ENCODE measurements at regions of chr14 and their contacts with region 1.

Region 1: GRCh38 chr14:34951271-34951670 is 31.5 kb upstream of the SRP54 start:
- DNase-seq: no peak
- H3K4me3 ChIP-seq: no peak overlapping the region
- H3K27ac ChIP-seq: peak overlapping the region; percentile 58
- H3K4me1 ChIP-seq: peaks cover 5% of the 10 kb centered on the region; the same call in 1 of the 2 replicates
- H3K27me3 ChIP-seq: no peaks in the 10 kb centered on the region
- CTCF ChIP-seq: no peak

Region 2: GRCh38 chr14:34023824-34024767 is 927.2 kb before region 1 on chr14:
- CTCF ChIA-PET with region 1: no interaction called
- POLR2A ChIA-PET with region 1: no interaction called
- intact Hi-C with region 1: no loop called
- DNase-seq: no peak
- H3K4me3 ChIP-seq: no peak overlapping the region
- H3K27ac ChIP-seq: no peak overlapping the region
- H3K4me1 ChIP-seq: no peaks in the 10 kb centered on the region
- H3K27me3 ChIP-seq: no peaks in the 10 kb centered on the region
- CTCF ChIP-seq: no peak

Region 3: DNA sequence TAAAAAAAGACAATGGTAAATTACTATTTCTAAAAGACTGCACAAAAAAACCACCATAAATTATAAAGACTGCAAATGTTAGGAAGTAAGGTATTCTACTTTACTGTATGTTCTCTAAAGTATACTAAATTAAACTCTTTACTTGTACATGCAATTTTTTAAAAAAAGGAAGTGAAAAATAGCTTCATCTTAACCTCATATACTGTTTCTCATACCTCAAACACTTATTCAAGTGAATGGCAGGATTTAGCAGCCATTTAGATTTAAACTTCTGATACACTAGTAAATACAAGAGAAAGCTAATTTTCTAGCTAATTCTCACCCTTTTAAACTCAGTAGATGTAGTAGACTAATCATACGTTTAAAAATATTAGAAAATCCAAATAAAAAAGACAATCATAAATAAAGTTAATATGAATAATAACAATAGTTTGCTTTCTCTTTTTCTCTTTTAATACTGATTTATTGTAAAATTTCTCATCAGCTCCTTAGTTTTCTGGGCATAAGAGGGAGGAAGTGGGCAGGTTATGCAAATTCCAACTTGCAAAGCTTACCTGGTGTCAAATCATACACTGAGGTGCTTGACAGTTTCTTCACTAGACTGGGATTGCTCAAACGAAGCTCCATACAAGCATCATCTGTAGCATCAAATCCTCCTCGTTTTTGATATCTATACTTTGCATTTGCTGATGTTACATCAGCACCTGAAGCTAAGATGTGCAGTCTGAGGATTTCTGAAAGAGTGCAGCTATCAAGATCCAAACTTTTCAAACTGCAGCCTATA is 165.9 kb before region 1 on chr14:
- CTCF ChIA-PET with region 1: no interaction called
- POLR2A ChIA-PET with region 1: interaction called, 13 read pairs
- intact Hi-C with region 1: no loop called
- DNase-seq: no peak
- H3K4me3 ChIP-seq: no peak overlapping the region
- H3K27ac ChIP-seq: no peak overlapping the region
- H3K4me1 ChIP-seq: no peaks in the 10 kb centered on the region
- H3K27me3 ChIP-seq: no peaks in the 10 kb centered on the region
- CTCF ChIP-seq: no peak